ENCODE measurements at regions of chr13 and their contacts with region 1.

Region 1: DNA sequence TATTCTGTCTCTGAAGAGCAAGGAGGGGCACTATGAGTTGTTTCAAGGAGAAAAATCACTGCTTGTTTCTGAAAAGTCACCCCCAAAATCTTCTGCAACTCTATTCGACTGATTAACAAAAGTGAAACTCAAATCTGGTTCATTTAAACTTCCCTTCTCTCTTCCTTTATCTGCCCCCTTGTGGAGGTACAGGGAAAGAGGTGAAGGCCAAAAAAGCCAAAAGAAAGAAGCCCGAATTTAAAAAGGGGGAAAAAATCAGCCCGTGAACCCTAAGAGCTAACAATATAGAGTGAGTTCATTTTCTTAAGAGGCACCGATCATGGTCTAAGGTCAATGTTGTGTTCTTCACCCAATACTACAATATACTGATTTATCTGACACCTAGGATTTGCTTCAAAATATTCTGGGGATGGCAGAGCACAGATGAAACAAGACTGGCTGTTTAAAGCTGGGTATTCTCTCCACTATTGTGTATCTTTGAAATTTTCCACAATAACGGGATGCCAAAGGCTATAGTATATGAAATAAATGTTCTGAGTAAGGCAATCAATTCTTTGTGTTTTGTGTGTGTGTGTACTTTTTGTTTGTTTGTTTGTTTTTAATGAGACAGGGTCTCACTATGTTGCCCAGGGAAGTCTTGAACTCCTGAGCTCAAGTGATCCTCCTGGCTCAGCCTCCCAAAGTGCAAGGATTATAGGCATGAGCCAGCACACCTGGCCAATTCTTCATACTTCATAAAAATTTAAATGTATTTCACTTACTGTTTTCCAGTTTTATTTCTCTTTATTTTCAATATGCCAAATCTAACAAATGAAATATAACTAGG is 55.0 kb upstream of the EEF1AKMT1 start:
- DNase-seq: peak in 16 of 42 donors; percentile 10 to 67 (median 29)

Region 2: GRCh38 chr13:20495082-20496023 is 333.4 kb before region 1 on chr13:
- intact Hi-C with region 1: loop called (anchors 10 kb)
- DNase-seq: peak in 39 of 42 donors; percentile 29 to 91 (median 74)

Region 3: DNA sequence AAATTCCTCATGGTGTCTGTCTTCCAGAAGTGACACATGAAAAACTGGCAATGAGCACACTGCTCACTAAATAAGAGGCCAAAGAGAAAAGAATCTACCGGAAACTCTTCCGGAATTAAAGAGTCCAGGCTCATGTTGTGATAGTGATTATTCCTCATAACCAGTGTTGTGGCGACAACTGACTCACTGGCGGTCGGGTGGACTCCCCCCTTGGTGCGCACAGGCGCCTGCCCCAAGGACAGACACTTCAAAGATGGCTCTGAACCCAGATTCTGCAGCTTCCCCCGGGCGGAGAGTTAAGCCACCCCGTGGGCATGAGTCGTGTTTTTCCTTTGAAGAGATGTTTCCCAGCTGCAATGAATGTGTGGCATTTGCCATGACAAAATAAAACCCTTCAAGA is 115.0 kb before region 1 on chr13:
- intact Hi-C with region 1: loop called (anchors 5 kb)
- DNase-seq: peak in 23 of 42 donors; percentile 28 to 80 (median 49)

Region 4: DNA sequence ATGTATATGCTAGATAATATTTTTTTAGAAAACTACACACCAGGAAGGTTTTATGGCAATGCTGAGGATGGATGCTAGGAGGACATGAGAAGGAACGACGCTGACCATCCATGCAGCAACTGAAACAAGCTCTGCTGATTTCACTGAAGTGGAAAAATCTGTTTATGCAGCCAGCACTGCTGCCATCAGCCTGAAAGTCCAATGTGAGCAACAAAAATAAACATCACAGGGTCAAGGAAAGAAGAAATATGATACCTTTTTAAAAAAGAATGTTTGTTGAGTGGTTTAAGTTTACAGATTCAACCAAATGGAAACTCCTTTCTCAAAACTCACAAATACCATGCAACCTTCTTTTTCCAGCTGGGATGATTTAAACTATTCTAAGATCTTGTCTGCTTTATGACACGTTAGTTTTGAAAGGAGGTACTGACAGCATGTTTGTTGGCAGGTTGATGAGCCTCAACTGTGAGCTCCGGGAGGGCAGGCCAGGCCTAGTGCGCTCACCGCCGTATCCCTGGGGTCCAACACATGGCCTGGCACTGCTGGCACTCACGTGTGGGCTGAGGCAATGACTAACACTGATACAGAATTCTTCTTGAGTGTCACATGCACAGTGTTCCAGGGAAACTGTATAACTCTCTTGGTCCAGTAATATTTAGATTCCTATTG is 185.9 kb after region 1 on chr13:
- intact Hi-C with region 1: no loop called
- DNase-seq: peak in 1 of 42 donors; percentile 32

Region 5: DNA sequence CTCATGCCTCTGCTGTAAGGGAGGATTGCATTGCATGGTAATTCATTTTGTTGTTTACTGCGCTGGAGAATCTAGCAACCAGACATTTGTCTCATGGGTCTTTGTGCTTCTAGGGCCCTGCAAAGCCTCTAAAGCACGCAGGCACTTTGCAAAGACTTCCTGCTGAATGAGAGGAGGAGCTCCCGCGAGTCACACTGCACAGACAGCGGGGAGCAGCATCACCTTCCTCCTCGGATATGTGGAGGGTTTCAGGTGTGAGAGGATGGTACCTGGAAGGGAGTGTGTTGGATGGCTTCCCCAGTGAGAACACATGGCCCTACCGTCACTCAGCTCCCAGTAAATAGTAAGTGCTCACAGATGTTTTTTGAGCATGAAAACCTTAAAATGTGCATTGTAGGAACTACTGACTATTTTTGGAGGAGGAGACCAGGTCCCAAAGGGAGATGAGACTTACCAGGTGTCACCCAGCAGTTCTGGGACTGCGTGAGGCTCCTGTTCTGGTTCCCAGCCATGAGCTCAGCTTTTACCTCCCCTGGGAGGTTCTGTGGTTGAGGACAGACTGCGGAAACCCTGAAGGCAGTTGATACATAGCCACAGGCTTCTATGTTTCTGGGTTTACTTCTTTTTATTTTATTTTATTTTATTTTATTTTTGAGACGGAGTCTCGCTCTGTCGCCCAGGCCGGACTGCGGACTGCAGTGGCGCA is 1120.2 kb after region 1 on chr13:
- intact Hi-C with region 1: no loop called
- DNase-seq: no peak

Measured in head of caudate nucleus (tissue), 42 donors.